ENCODE measurements at regions of chr1 and their contacts with region 1.

Region 1: GRCh38 chr1:194774535-194774934 is 1588.1 kb upstream of the B3GALT2 start:
- DNase-seq: no peak
- CTCF ChIP-seq: no peak

Region 2: GRCh38 chr1:194369060-194369459 is 405.5 kb before region 1 on chr1:
- CTCF ChIA-PET with region 1: no interaction called
- POLR2A ChIA-PET with region 1: no interaction called
- DNase-seq: no peak
- CTCF ChIP-seq: no peak

Region 3: DNA sequence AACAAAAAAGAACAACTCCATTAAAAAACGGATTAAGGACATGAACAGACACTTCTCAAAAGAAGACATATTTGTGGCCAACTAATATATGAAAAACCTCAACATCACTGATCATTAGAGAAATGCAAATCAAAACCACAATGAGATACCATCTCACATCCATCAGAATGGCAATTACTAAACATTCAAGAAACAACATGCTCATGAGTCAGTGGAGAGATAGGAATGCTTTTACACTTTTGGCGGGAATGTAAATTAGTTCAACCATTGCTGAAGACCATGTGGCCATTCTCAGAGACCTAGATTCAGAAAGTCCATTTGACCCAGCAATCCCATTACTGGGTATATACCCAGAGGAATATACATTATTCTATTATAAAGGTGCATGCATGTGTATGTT is 145.5 kb before region 1 on chr1:
- CTCF ChIA-PET with region 1: no interaction called
- POLR2A ChIA-PET with region 1: no interaction called
- DNase-seq: no peak
- CTCF ChIP-seq: no peak

Region 4: GRCh38 chr1:194717941-194718340 is 56.6 kb before region 1 on chr1:
- CTCF ChIA-PET with region 1: no interaction called
- POLR2A ChIA-PET with region 1: no interaction called
- DNase-seq: no peak
- CTCF ChIP-seq: no peak

Region 5: GRCh38 chr1:194787001-194787400 is 12.5 kb after region 1 on chr1:
- CTCF ChIA-PET with region 1: interaction called, 19 read pairs
- POLR2A ChIA-PET with region 1: no interaction called
- DNase-seq: no peak
- CTCF ChIP-seq: no peak

Measured in GM10248 (cell line).